ENCODE measurements at regions of chr2 and their contacts with region 1.

Region 1: DNA sequence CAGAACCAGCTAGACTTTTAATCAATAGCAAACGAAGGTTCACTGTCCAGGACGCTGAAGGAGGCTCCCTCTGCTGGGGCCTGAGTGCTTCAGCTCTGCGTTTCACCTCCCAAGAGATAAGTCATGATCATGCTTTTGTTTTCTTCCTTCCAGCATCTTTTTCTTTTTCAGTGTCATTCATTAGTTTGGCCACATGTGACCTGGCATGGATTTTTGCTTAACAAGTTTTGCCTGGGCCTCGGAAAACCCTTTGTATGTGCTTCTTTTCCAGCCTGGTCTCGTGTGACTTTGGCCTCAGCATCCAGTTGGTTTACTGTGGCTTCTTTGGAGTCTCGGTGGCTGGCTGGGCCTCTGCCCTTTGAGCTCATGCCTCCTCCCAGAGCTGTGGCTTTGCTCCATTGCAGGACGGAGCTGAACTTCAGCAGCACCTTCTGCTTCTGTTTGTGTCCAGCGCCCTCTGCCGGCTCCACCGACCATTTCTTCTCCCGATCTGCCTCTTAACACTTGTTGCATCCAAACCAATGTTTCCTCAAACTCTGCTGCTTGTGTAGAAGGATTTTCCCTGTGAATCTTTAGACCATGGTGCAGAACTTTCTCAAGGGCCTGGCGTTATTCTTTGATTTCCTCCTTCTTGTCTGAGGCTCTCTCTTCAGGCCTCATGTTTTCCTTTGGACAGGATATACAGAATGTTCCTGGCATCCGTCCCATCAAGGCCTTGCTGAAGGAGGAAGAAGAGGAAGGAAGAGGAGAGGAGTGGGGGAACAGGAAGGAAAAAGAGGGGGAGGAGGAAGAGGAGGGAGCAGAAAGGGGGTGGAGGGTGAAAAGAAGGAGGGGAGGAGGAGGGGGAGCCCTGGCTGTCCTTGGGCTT is 23.6 kb upstream of the HES6 start:
- DNase-seq: peak; percentile 92 to 98
- H3K4me3 ChIP-seq: no peak overlapping the region
- CTCF ChIP-seq: peak in 1 of 3 donors; percentile 81
- POLR2A ChIP-seq: no peak

Region 2: DNA sequence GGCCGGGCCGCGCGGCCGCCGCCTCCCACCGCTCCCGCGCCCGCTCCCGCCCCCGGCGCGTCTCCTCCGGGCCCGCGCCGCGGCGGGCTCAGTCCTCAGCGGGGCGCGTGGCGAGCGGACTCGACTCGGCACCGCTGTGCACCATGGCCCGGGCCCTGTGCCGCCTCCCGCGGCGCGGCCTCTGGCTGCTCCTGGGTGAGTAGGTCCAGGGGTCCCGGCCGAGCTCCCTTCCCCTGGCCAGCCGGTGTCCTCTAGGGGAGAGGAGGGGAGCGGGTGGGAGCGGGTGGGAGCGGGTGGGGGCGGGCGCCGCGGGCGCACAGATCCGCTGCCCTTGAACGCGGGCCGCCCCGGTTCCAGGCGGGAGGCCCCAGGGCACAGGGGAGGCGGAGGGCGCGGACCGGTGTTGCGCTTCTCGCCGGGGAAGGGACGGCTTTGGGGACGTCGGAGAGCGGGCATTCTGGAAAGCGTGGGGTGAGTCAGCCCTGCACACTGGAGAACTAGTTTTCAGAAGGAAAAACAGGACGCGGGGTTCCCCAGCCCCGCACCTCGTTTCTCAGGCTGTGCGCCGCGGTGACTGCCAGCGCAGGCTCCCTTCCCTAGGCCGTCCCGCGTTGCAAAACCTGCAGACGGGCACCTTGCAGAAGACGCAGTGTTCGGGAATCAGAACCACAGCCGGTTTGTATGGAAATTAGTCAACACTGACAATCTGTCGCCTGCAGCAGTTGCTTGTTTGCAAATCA is 403.7 kb before region 1 on chr2 and contains the start of gene RAMP1:
- intact Hi-C with region 1: loop called (anchors 10 kb)
- DNase-seq: no peak
- H3K4me3 ChIP-seq: no peak within 1 kb of the TSS
- CTCF ChIP-seq: no peak
- POLR2A ChIP-seq: no peak
- total RNA-seq, gene RAMP1: 7.3 to 19.1 (median 12.4) TPM

Measured in lower leg skin (tissue), 4 donors.